ENCODE measurements at regions of chr10 and their contacts with region 1.

Region 1: GRCh38 chr10:58993480-58994221 is 182.8 kb upstream of the PHYHIPL start:
- DNase-seq: peak in 3 of 10 donors; percentile 59 to 82 (median 65)
- H3K4me3 ChIP-seq: peak overlapping the region in 17 of 59 donors; percentile 1 to 49 (median 18)
- H3K27ac ChIP-seq: peak overlapping the region; percentile 77 to 100 (median 98)
- H3K27me3 ChIP-seq: no peaks in the 10 kb centered on the region
- CTCF ChIP-seq: peak in 3 of 56 donors; percentile 7 to 16 (median 14)

Region 2: GRCh38 chr10:58414270-58415041 is 579.2 kb before region 1 on chr10:
- intact Hi-C with region 1: no loop called
- DNase-seq: no peak
- H3K4me3 ChIP-seq: peak overlapping the region in 1 of 59 donors; percentile 31
- H3K27ac ChIP-seq: no peak overlapping the region
- H3K27me3 ChIP-seq: no peaks in the 10 kb centered on the region
- CTCF ChIP-seq: peak in 47 of 56 donors; percentile 17 to 61 (median 37)

Region 3: DNA sequence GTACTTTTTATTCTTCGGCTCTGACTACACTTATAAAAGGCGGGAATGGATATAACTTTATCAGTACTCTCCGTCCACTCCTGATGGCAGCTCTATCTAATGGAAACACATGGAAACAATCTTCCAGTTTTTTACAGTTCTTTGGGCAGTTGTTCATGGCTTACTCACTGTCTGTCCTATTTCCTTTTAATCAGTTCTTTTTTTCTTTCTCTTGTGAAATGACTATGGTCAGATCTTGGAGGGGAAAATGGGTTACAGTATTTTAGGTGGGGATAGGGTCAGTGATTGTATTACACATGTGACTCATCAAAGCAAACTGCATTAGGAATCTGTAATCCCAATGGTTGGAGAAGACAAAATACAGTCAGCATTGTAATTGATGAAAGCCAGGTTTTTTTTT is 368.6 kb before region 1 on chr10:
- intact Hi-C with region 1: no loop called
- DNase-seq: no peak
- H3K4me3 ChIP-seq: no peak overlapping the region
- H3K27ac ChIP-seq: no peak overlapping the region
- H3K27me3 ChIP-seq: no peaks in the 10 kb centered on the region
- CTCF ChIP-seq: no peak

Region 4: GRCh38 chr10:58950618-58951017 is 43.0 kb before region 1 on chr10:
- intact Hi-C with region 1: no loop called
- DNase-seq: no peak
- H3K4me3 ChIP-seq: no peak overlapping the region
- H3K27ac ChIP-seq: peak overlapping the region in 28 of 59 donors; percentile 2 to 80 (median 29)
- H3K27me3 ChIP-seq: no peaks in the 10 kb centered on the region
- CTCF ChIP-seq: no peak

Region 5: DNA sequence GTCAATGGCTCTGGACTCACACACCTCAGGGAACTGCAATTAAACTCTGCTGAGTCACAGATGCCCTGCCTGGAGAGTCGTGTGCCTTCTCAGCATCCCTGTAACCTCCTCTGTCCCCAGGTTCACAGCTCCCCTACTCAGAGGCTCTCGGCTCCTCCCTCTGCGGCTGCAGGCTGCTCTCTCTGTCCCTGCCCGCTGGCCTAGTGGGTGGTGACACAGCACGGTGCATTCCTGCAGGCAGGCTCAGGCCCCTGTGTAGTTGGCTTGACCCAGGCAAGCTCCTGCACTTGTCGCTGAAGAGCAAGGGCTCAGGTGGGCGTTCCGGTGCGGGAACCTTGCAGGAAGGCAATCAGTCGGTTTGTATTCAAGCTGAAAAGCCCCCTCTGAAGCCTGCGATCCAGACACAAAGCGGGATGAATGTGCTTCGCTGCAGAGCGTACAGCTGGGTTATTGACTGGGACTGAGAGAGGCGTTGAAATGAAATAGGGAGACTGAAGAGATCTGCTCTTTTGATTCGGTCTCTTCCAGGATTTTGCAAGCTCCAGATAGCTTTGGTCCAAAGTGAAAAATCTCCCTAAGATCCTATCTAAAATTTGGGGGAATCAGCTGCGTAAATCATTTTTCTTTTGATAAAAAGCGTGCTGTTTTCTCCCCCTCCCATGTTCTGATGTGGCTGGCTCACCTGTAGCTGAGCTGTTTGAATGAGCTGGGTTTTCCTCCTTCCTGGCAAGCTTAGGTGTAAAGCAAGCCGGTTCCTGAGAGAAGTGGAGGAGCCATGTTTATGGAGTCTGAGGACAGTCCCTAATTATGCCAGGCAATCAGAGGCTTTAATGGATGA is 25.9 kb before region 1 on chr10:
- intact Hi-C with region 1: loop called (anchors 1 to 2 kb)
- DNase-seq: peak; percentile 58 to 88 (median 74)
- H3K4me3 ChIP-seq: peak overlapping the region in 55 of 59 donors; percentile 5 to 61 (median 38)
- H3K27ac ChIP-seq: peak overlapping the region; percentile 79 to 99 (median 96)
- H3K27me3 ChIP-seq: no peaks in the 10 kb centered on the region
- CTCF ChIP-seq: peak in 2 of 56 donors; percentile 10 to 13

Region 6: GRCh38 chr10:60271319-60272040 is 1277.8 kb after region 1 on chr10:
- intact Hi-C with region 1: no loop called
- DNase-seq: no peak
- H3K4me3 ChIP-seq: no peak overlapping the region
- H3K27ac ChIP-seq: peak overlapping the region in 20 of 59 donors; percentile 1 to 54 (median 21)
- H3K27me3 ChIP-seq: no peaks in the 10 kb centered on the region
- CTCF ChIP-seq: no peak

Measured in dorsolateral prefrontal cortex (tissue), 120 donors.